Activated CD4-positive, alpha-beta memory T cell treated with anti-CD3 and anti-CD28 coated beads for 36 hours (primary cell): ENCODE measurements at regions of chr9 and their contacts with region 1.

Region 1: DNA sequence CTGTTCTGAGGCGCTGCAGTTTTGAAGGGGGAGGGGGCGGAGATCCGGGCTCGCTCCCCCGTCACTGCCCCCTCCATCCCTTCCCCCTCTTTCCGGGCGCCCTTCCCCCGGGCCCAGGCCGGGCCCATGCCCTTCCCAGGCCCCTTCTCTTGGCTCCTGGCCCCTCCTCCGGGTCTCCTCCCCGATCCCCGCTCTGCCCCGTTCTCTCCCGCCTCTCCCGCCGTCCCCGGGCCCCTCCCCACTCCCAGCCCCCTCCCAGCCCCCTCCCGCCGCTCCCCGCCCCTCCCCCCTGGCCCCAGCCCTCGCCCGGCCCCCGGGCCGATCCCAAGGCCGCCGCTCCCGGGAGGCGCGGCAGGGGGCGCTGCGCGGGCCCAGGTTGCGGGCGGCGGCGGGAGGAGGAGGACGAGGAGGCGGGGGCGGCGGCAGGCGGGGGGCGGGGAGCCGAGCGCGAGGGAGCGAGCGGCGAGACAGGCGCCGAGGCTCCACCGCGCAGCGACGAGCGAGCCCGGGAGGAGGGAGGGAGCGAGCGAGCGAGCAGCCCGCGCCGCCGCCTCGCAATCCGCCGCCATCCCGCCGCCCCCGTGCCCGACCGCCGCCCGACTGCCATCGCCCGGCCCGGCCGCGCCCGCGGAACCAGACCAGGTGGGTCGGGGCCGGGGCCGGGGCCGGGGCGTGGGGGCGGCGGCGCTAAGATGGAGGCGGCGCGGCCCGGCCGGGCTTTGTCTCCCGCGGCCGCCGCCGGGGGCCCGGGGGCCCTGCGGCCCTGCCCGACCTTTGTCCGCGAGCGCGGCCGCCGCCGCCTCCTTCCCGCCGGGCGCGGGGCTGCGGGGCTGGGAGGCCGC is at the start of gene PRRC2B:
- DNase-seq: peak; percentile 89
- H3K4me3 Mint-ChIP-seq: peak within 1 kb of the TSS; percentile 89
- H3K27ac Mint-ChIP-seq: peak within 1 kb of the TSS; percentile 95
- H3K4me1 Mint-ChIP-seq: peaks cover 43% of the 10 kb centered on the region
- H3K27me3 Mint-ChIP-seq: no peaks in the 10 kb centered on the region
- total RNA-seq, gene PRRC2B: 127 to 135 TPM

Region 2: DNA sequence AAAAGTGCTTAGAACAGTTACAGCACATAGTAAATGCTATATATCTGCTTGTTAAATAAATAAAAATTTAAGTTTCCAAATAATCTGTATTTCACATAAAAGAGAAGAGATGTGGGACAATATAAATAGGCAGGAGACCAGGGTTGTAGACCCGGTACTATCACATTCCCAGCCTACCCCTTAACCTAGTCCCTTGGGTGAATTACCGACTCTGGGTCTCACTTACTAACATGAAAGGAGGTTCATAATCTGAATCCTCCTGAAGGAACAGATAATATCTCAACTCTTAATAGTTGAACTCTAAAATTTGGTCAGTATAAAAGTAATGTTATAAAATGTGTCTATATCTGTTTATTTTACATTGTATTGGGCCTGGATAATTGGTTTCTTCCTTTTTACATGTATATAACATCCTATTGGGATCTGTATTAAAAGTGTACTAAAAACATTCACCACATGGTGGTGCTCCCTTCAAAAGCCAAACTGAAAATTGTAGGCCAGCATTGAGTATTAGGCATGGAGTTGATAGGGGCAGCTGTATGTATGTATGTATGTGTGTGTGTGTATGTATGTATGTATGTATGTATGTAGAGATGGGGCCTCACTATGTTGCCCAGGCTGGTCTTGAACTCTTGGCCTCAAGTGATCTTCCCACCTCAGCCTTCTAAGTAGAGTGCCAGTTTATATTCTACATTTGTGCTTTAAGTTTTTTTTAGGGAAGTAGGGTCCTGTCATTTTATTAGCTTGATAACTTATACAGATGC is 623.0 kb before region 1 on chr9:
- CTCF ChIA-PET with region 1: no interaction called
- POLR2A ChIA-PET with region 1: no interaction called
- intact Hi-C with region 1: no loop called
- DNase-seq: no peak
- H3K4me3 Mint-ChIP-seq: no peak overlapping the region
- H3K27ac Mint-ChIP-seq: no peak overlapping the region
- H3K4me1 Mint-ChIP-seq: peaks cover 19% of the 10 kb centered on the region
- H3K27me3 Mint-ChIP-seq: no peaks in the 10 kb centered on the region

Region 3: GRCh38 chr9:131125128-131126058 is 268.4 kb before region 1 on chr9 and contains the start of gene NUP214:
- CTCF ChIA-PET with region 1: no interaction called
- POLR2A ChIA-PET with region 1: no interaction called
- intact Hi-C with region 1: loop called (anchors 5 kb)
- DNase-seq: peak; percentile 100
- H3K4me3 Mint-ChIP-seq: peak within 1 kb of the TSS; percentile 100
- H3K27ac Mint-ChIP-seq: peak within 1 kb of the TSS; percentile 96
- H3K4me1 Mint-ChIP-seq: peaks cover 29% of the 10 kb centered on the region
- H3K27me3 Mint-ChIP-seq: no peaks in the 10 kb centered on the region
- total RNA-seq, gene NUP214: 45.5 to 49.9 TPM

Region 4: GRCh38 chr9:131407717-131408195 is 13.9 kb after region 1 on chr9:
- CTCF ChIA-PET with region 1: interaction called, 5 read pairs
- POLR2A ChIA-PET with region 1: interaction called, 6 read pairs
- intact Hi-C with region 1: loop called (anchors 1 kb)
- DNase-seq: peak; percentile 53
- H3K4me3 Mint-ChIP-seq: peak overlapping the region; percentile 54
- H3K27ac Mint-ChIP-seq: peak overlapping the region; percentile 65
- H3K4me1 Mint-ChIP-seq: peaks cover 89% of the 10 kb centered on the region
- H3K27me3 Mint-ChIP-seq: no peaks in the 10 kb centered on the region

Region 5: DNA sequence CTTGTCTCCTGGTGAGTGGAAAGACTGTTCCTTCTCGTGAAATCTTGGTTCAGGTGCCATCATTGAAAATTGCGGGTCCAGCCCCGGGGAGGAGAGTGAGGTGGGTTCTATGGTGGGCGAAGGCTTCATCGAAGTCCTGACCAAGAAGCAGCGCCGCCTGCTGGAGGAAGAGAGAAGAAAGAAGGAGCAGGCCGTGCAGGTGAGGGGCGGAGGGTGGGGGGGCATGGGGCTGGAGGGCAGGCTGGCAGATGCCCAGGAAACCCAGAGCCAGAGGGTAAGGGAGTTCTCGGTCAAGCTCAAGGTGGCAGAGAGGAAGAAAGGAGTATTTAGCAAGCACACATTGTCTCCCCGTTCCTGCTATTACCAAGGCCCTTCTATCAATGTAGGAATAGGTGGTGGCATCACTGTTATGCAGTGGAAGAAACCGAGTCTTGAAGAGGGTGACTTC is 84.6 kb after region 1 on chr9:
- CTCF ChIA-PET with region 1: interaction called, 5 read pairs
- POLR2A ChIA-PET with region 1: no interaction called
- intact Hi-C with region 1: loop called (anchors 1 kb)
- DNase-seq: peak; percentile 69
- H3K4me3 Mint-ChIP-seq: no peak overlapping the region
- H3K27ac Mint-ChIP-seq: no peak overlapping the region
- H3K4me1 Mint-ChIP-seq: peaks cover 11% of the 10 kb centered on the region
- H3K27me3 Mint-ChIP-seq: no peaks in the 10 kb centered on the region